CD4-positive, alpha-beta T cell (primary cell): ENCODE measurements at regions of chr18 and their contacts with region 1.

Region 1: GRCh38 chr18:58314284-58314683 is 270.3 kb downstream of the NEDD4L start:
- DNase-seq: peak in 2 of 14 experiments; percentile 50 to 67
- ATAC-seq: no peak
- H3K4me3 ChIP-seq: no peak overlapping the region
- H3K4me3 Mint-ChIP-seq: no peak overlapping the region
- H3K27ac ChIP-seq: no peak overlapping the region
- H3K27ac Mint-ChIP-seq: no peak overlapping the region
- H3K4me1 ChIP-seq: peaks cover 43% of the 10 kb centered on the region
- H3K4me1 Mint-ChIP-seq: peaks cover 77% of the 10 kb centered on the region
- H3K27me3 ChIP-seq: no peaks in the 10 kb centered on the region
- H3K27me3 Mint-ChIP-seq: no peaks in the 10 kb centered on the region
- CTCF ChIP-seq: no peak

Region 2: DNA sequence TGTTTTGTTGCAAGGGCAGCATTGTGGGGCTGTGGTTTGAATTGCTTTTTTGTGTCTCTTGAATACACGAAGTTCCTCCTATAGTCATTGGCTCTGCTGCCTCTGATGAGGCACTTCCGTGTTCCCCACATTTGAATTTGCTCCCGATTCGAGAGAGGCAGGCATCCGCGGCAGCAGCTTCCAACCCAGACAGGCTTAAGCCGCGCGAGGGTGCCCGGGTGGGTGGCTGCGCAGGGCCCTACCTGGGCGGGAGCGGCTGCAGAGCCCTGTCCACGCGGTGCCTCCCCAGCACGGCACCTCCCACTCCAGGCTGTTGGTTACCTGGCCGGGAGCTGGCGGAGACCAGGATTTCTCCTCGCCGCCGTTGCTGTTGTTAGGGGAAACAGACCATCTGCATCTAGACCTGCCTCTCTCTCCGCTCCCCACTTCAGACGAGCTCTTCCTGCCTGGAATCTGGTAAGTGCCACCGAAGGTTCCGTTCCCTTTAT is 119.0 kb before region 1 on chr18:
- CTCF ChIA-PET with region 1: no interaction called
- POLR2A ChIA-PET with region 1: no interaction called
- intact Hi-C with region 1: loop called in 1 of 2 experiments (anchors 5 kb)
- DNase-seq: peak in 10 of 14 experiments; percentile 2 to 46 (median 22)
- ATAC-seq: peak; percentile 75
- H3K4me3 ChIP-seq: peak overlapping the region; percentile 59
- H3K4me3 Mint-ChIP-seq: peak overlapping the region; percentile 82
- H3K27ac ChIP-seq: no peak overlapping the region
- H3K27ac Mint-ChIP-seq: peak overlapping the region; percentile 6
- H3K4me1 ChIP-seq: peaks cover 12% of the 10 kb centered on the region
- H3K4me1 Mint-ChIP-seq: peaks cover 20% of the 10 kb centered on the region
- H3K27me3 ChIP-seq: peaks cover 3 to 5% of the 10 kb centered on the region in 2 experiments
- H3K27me3 Mint-ChIP-seq: peaks cover 10% of the 10 kb centered on the region
- CTCF ChIP-seq: no peak

Region 3: DNA sequence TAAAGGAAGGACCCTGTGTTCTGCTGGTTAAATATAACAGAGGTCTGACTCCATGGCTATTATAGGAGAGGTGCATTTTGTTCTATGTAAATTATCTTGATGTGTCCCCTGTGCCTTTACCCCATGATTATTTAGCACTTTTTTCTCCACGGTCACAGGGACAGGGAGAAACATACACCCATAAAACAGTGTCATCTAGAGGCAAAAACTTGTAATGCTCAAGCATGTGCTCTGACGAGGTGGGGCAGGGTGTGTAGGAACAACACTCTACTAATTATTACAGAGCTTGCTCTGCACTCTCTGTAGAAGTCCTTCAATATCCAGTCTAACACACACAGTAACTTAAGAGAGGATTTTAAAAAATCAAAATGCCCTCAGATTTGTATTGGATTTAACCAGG is 82.4 kb before region 1 on chr18:
- CTCF ChIA-PET with region 1: no interaction called
- POLR2A ChIA-PET with region 1: no interaction called
- intact Hi-C with region 1: no loop called
- DNase-seq: no peak
- ATAC-seq: no peak
- H3K4me3 ChIP-seq: no peak overlapping the region
- H3K4me3 Mint-ChIP-seq: no peak overlapping the region
- H3K27ac ChIP-seq: no peak overlapping the region
- H3K27ac Mint-ChIP-seq: no peak overlapping the region
- H3K4me1 ChIP-seq: no peaks in the 10 kb centered on the region
- H3K4me1 Mint-ChIP-seq: no peaks in the 10 kb centered on the region
- H3K27me3 ChIP-seq: no peaks in the 10 kb centered on the region
- H3K27me3 Mint-ChIP-seq: peaks cover 7% of the 10 kb centered on the region
- CTCF ChIP-seq: no peak

Region 4: DNA sequence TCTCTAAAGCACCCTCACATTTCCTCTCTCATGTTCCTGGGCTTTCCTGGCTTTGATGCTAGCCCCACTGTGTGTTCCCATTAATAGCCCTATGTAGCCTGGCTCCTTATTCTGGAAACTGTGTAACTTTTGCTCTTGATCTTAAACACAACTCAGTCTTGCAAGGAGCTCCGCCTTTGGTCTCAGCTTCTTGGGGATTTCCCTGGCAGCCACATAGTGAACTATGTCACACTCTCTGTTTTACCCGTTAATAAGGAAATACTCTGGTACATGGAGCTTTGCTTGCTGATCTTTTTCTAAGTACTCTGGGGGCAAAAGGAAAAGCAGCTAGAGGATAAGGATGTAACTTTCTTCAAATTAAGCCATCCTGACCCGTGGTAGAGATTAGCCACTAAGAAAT is 10.9 kb before region 1 on chr18:
- CTCF ChIA-PET with region 1: no interaction called
- POLR2A ChIA-PET with region 1: interaction called, 11 read pairs
- intact Hi-C with region 1: no loop called
- DNase-seq: peak in 5 of 14 experiments; percentile 16 to 71 (median 52)
- ATAC-seq: peak; percentile 89
- H3K4me3 ChIP-seq: no peak overlapping the region
- H3K4me3 Mint-ChIP-seq: peak overlapping the region; percentile 37
- H3K27ac ChIP-seq: peak overlapping the region in 1 of 2 donors; percentile 18
- H3K27ac Mint-ChIP-seq: peak overlapping the region; percentile 64
- H3K4me1 ChIP-seq: peaks cover 18% of the 10 kb centered on the region
- H3K4me1 Mint-ChIP-seq: peaks cover 30% of the 10 kb centered on the region
- H3K27me3 ChIP-seq: no peaks in the 10 kb centered on the region
- H3K27me3 Mint-ChIP-seq: no peaks in the 10 kb centered on the region
- CTCF ChIP-seq: no peak